GM10248 (cell line): ENCODE measurements at regions of chr5 and their contacts with region 1.

Region 1: DNA sequence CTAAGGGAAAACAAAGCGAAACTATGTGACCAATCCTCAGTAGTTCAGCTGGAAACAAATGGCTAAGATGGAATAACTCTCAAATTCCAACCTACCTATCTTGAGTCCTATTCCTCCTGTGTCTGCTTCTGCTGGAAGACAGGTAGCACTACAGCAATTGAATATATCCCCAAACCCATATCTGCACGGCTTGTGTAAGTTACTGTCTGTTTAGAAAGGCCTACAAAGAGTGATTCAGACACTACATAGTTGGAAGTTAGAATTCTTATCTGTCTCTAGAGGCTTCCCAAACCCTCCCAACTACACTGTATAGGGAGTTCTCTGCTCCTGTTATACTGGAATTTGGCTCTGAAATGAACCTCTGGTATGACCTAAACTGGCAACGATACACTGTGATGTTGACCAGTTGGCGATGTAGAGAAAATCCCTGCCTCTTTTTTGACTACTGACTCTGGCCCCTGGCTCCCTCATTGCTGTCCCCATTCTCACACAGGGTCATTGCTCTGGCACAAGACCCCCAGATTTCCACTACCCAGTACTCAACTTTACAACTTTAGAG is 22.6 kb upstream of the NADK2 start:
- DNase-seq: no peak
- CTCF ChIP-seq: no peak

Region 2: GRCh38 chr5:36241631-36242533 is 22.4 kb before region 1 on chr5 and contains the start of gene NADK2:
- CTCF ChIA-PET with region 1: interaction called, 27 read pairs
- POLR2A ChIA-PET with region 1: no interaction called
- DNase-seq: peak; percentile 95
- CTCF ChIP-seq: peak; percentile 58

Region 3: DNA sequence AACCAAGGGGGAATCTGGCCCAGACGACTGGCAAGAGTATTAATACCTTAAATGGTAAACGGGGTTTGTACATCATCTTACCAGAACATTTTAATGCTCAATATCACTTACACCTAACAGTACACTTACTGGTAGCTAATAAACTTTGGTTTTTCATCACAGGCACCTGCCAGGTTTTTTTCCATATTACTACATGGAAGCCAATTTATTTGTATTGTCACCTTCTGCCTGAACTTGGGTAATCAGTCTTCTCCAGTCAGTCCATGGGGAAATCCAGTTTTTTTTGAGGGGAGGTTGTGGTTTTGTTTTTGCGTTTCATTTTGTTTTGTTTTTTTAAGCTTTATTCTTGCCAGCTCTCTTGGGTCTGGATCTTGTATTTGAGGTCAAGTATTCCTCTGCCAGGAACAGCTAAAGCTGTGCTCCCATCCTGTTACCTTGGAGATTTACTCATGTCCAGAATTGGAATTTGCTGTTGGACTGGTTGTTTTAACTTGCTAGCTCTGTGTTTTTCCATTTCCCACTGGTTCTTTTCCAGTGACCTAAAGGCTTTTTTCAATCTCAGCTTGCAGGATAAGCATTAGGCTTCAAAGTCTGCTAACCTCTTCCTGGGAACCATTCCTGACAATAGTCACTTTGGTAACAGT is 11.4 kb before region 1 on chr5:
- CTCF ChIA-PET with region 1: interaction called, 28 read pairs
- POLR2A ChIA-PET with region 1: no interaction called
- DNase-seq: no peak
- CTCF ChIP-seq: no peak

Region 4: GRCh38 chr5:36279054-36279698 is 14.9 kb after region 1 on chr5:
- CTCF ChIA-PET with region 1: interaction called, 54 read pairs
- POLR2A ChIA-PET with region 1: no interaction called
- DNase-seq: no peak
- CTCF ChIP-seq: no peak

Region 5: DNA sequence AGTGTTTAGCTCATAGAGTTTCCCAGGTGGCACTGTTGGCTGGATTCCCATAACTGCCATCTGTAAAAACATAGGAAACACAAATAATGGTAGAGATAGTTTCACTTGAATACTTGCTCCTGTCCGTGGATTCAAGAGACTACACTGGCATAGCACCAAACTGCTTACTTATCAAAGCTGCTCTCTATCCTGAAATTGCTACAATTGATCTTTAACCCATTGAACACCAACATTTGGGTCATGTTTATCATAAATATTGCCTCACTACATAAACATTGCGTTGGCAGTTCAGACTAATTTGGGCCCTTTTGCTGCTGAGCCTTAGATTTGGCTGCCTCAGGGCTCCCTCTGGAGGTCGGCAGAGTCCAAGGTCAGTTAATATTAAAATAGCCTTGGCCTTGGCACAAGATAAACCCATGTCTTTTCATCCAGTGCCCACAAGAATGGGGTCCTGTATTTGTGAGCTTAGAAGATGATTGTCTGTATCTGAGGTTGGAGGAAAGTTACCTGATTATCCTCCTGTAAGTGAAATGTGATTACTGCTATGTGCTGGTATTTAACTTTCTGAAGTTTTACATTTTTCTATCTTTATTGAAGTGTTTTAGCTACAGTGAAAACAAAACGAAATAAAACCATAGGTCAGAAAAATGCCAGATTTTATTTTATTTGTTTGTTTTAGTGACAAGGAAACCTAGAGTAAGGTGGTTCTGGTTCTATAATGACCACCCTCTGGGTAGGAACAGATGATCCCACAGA is 41.5 kb after region 1 on chr5:
- CTCF ChIA-PET with region 1: interaction called, 32 read pairs
- POLR2A ChIA-PET with region 1: no interaction called
- DNase-seq: peak; percentile 30
- CTCF ChIP-seq: peak; percentile 78

Region 6: GRCh38 chr5:36507332-36507952 is 243.2 kb after region 1 on chr5:
- CTCF ChIA-PET with region 1: interaction called, 18 read pairs
- POLR2A ChIA-PET with region 1: no interaction called
- DNase-seq: peak; percentile 65
- CTCF ChIP-seq: peak; percentile 85

Region 7: GRCh38 chr5:36690041-36690961 is 426.0 kb after region 1 on chr5:
- CTCF ChIA-PET with region 1: interaction called, 15 read pairs
- POLR2A ChIA-PET with region 1: interaction called, 5 read pairs
- DNase-seq: peak; percentile 86
- CTCF ChIP-seq: peak; percentile 83